Caco-2 (cell line): ENCODE measurements at regions of chr5 and their contacts with region 1.

Region 1: GRCh38 chr5:12896086-12896485 is 991.8 kb upstream of the CTNND2 start:
- DNase-seq: no peak
- H3K4me3 ChIP-seq: no peak overlapping the region
- H3K4me3 Mint-ChIP-seq: no peak overlapping the region
- H3K27ac Mint-ChIP-seq: no peak overlapping the region
- H3K4me1 ChIP-seq: no peaks in the 10 kb centered on the region
- H3K4me1 Mint-ChIP-seq: no peaks in the 10 kb centered on the region
- H3K27me3 ChIP-seq: no peaks in the 10 kb centered on the region
- H3K27me3 Mint-ChIP-seq: peaks cover 13% of the 10 kb centered on the region
- CTCF ChIP-seq: no peak

Region 2: GRCh38 chr5:12861886-12862654 is 34.0 kb before region 1 on chr5:
- CTCF ChIA-PET with region 1: no interaction called
- POLR2A ChIA-PET with region 1: no interaction called
- intact Hi-C with region 1: loop called (anchors 1 kb)
- DNase-seq: no peak
- H3K4me3 ChIP-seq: no peak overlapping the region
- H3K4me3 Mint-ChIP-seq: no peak overlapping the region
- H3K27ac Mint-ChIP-seq: no peak overlapping the region
- H3K4me1 ChIP-seq: no peaks in the 10 kb centered on the region
- H3K4me1 Mint-ChIP-seq: no peaks in the 10 kb centered on the region
- H3K27me3 ChIP-seq: no peaks in the 10 kb centered on the region
- H3K27me3 Mint-ChIP-seq: peaks cover 5% of the 10 kb centered on the region
- CTCF ChIP-seq: no peak